Prostate gland (tissue), 2 donors: ENCODE measurements at regions of chr1 and their contacts with region 1.

Region 1: DNA sequence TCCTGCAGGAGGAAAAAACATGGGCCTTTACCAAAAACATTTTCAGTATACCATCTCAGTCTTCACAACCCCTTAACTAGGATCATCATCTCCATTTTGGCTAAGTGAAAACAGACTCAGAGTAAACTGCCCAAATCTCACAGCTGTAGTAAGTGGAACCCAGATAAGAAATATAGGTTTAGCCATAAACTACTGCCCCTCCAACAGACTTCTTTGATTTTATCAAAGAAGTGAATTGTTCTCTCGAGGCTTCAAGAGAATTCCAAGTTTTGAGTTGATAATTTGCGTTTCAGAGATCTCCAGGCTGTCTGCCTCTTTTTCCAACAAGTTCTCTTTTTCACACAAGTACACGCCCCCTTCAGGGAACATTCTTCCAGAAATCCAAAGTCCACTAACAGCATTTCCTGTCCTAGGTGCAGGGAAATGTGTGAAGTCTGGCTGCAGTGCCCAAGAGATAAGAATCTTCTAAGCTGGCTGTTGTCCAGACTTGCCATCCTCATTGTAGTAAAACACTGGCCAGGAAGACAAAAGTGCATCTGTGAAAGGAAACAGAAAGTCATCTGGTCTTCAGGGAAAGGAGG is 30.8 kb downstream of the RNF19B start:
- DNase-seq: peak; percentile 65
- H3K4me3 ChIP-seq: no peak overlapping the region
- H3K27ac ChIP-seq: peak overlapping the region; percentile 12 to 42
- H3K4me1 ChIP-seq: no peaks in the 10 kb centered on the region
- H3K27me3 ChIP-seq: no peaks in the 10 kb centered on the region
- CTCF ChIP-seq: peak in 2 of 4 experiments; percentile 2 to 3
- POLR2A ChIP-seq: no peak

Region 2: GRCh38 chr1:33055210-33056008 is 121.6 kb after region 1 on chr1:
- intact Hi-C with region 1: loop called (anchors 5 kb)
- DNase-seq: peak; percentile 66
- H3K4me3 ChIP-seq: no peak overlapping the region
- H3K27ac ChIP-seq: peak overlapping the region; percentile 26 to 38
- H3K4me1 ChIP-seq: no peaks in the 10 kb centered on the region
- H3K27me3 ChIP-seq: no peaks in the 10 kb centered on the region
- CTCF ChIP-seq: peak in 3 of 4 experiments; percentile 67 to 78 (median 72)
- POLR2A ChIP-seq: no peak

Region 3: GRCh38 chr1:33072707-33073106 is 138.9 kb after region 1 on chr1:
- intact Hi-C with region 1: no loop called
- DNase-seq: no peak
- H3K4me3 ChIP-seq: no peak overlapping the region
- H3K27ac ChIP-seq: no peak overlapping the region
- H3K4me1 ChIP-seq: no peaks in the 10 kb centered on the region
- H3K27me3 ChIP-seq: no peaks in the 10 kb centered on the region
- CTCF ChIP-seq: no peak
- POLR2A ChIP-seq: no peak